ENCODE measurements at regions of chr14 and their contacts with region 1.

Region 1: GRCh38 chr14:99982537-99983250 is 82.5 kb upstream of the EVL start:
- DNase-seq: peak; percentile 77
- ATAC-seq: peak; percentile 94
- H3K4me3 Mint-ChIP-seq: no peak overlapping the region
- H3K27ac Mint-ChIP-seq: peak overlapping the region; percentile 9
- H3K4me1 Mint-ChIP-seq: peaks cover 14% of the 10 kb centered on the region
- H3K27me3 Mint-ChIP-seq: no peaks in the 10 kb centered on the region

Region 2: DNA sequence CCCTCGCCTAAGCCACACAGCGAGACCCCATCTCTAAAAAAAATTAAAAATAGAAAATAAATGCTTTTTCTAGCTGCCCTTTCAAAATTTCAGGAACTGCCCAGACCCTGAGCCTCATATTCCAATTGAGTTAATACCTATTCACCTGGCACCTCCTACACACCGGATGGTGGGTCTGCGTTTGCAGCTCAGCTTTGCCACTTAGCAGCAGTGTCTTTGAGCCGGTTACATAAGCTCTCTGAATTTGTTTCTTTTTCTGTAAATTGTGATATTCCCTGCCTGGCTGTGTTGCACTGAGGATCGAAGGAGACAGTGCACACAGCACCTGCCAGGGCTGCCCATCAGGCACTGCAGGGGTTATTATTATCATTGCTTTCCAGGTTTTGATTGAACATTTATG is 63.9 kb before region 1 on chr14:
- CTCF ChIA-PET with region 1: no interaction called
- POLR2A ChIA-PET with region 1: no interaction called
- intact Hi-C with region 1: no loop called
- DNase-seq: no peak
- ATAC-seq: no peak
- H3K4me3 Mint-ChIP-seq: no peak overlapping the region
- H3K27ac Mint-ChIP-seq: no peak overlapping the region
- H3K4me1 Mint-ChIP-seq: no peaks in the 10 kb centered on the region
- H3K27me3 Mint-ChIP-seq: peaks cover 6% of the 10 kb centered on the region

Region 3: DNA sequence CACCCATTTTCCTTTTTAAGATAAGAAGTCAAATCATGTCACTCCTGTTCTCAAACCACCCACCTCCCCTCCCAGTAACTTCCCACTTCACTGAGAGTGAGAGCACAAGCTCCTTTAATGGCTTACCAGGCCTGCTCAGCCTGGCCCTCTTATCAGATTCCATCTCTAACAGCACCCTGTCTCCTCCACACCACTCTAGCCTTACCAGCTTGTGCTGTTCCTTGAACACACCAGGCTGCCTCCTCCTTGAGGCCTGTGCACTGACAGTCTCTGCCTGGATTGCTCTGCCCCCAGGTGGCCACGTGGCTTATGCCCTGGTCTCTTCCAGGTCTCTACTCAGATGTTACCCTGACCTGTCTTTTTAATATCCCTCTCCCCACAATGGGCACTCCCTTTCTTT is 42.4 kb after region 1 on chr14:
- CTCF ChIA-PET with region 1: interaction called, 14 read pairs
- POLR2A ChIA-PET with region 1: no interaction called
- intact Hi-C with region 1: loop called in 1 of 2 experiments (anchors 1 kb)
- DNase-seq: peak; percentile 63
- ATAC-seq: peak; percentile 95
- H3K4me3 Mint-ChIP-seq: no peak overlapping the region
- H3K27ac Mint-ChIP-seq: no peak overlapping the region
- H3K4me1 Mint-ChIP-seq: peaks cover 12% of the 10 kb centered on the region
- H3K27me3 Mint-ChIP-seq: no peaks in the 10 kb centered on the region

Region 4: GRCh38 chr14:100049220-100049619 is 66.5 kb after region 1 on chr14:
- CTCF ChIA-PET with region 1: interaction called, 12 read pairs
- POLR2A ChIA-PET with region 1: no interaction called
- intact Hi-C with region 1: no loop called
- DNase-seq: no peak
- ATAC-seq: peak; percentile 47
- H3K4me3 Mint-ChIP-seq: no peak overlapping the region
- H3K27ac Mint-ChIP-seq: no peak overlapping the region
- H3K4me1 Mint-ChIP-seq: peaks cover 24% of the 10 kb centered on the region
- H3K27me3 Mint-ChIP-seq: no peaks in the 10 kb centered on the region

Region 5: DNA sequence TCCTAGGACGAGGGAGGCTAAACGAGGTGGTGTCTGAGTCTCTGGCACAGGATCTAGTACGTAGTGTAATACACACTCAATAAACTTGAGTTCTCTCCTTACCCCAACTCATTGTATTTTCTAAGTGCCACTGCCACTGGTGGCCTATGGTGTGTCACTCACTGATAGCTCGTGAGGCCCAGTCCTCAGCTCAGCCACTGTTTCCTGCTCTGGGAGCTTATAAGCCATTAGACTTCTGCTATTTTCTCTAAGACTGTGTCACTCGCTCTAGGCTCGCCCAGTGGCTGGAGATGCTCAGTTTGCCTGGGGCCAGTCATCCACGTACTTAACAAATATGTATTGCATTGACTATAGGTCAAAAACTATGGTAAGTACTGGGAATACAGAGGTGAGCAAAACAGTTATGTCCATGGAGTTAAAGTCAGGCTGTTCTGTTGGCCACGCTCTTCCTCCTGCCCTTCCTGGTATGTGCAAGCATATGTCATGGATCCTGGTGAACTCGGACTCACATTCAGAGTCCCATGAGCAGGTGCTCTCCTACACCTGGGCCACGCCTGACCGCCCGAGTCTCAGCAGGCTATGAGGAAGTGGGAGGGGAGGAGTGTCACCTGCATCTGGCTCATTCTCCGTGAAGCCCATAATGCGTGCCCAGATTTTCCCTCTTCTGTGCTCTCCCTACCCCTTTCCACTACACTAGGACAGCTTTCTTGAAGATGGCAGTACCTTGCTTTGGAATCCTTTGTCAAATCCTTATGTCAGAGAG is 135.1 kb after region 1 on chr14:
- CTCF ChIA-PET with region 1: interaction called, 13 read pairs
- POLR2A ChIA-PET with region 1: no interaction called
- intact Hi-C with region 1: no loop called
- DNase-seq: no peak
- ATAC-seq: peak; percentile 27
- H3K4me3 Mint-ChIP-seq: no peak overlapping the region
- H3K27ac Mint-ChIP-seq: peak overlapping the region; percentile 83
- H3K4me1 Mint-ChIP-seq: peaks cover 34% of the 10 kb centered on the region
- H3K27me3 Mint-ChIP-seq: no peaks in the 10 kb centered on the region

Region 6: DNA sequence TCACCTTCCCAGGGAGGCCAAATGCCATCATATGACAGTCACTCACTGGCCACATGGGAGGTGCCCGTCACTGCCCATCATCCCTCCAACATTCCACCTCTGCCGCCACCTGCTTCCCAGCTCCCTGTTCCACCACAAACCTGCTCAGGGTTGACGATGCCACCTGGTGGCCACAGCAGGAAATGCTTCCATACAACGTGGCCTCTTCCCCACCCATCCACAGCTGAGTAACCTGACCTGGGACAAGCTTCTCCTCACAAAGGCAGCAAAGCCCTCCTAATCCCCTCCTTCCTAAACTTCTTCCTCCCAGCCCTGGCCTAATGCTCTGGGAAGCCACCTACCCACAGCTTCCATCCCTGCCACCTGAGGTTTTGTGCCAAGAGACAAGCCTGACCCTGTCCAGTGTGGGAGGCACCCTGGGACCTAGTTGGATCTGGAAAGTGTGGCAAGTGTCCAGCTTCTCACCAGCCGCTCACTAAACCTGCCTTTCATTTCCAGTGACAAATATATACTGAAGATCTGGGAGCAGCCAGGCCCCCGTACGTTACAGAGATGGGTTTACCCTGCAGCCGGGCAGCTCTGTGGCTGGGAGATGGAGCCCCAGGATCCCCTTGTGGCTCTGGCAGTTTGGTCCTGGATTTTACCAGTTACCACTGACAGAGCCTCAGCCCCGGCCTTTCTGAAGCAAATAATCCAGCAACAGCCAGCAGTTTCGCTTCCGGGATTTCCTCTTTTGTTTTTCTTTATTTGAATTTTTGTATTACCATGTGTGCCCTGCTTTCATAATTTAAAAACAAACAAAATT is 172.6 kb after region 1 on chr14:
- CTCF ChIA-PET with region 1: interaction called, 9 read pairs
- POLR2A ChIA-PET with region 1: no interaction called
- intact Hi-C with region 1: loop called in 1 of 2 experiments (anchors 1 kb)
- DNase-seq: peak; percentile 75
- ATAC-seq: no peak
- H3K4me3 Mint-ChIP-seq: no peak overlapping the region
- H3K27ac Mint-ChIP-seq: no peak overlapping the region
- H3K4me1 Mint-ChIP-seq: peaks cover 6% of the 10 kb centered on the region
- H3K27me3 Mint-ChIP-seq: peaks cover 15% of the 10 kb centered on the region

Region 7: GRCh38 chr14:100221533-100222223 is 239.0 kb after region 1 on chr14:
- CTCF ChIA-PET with region 1: no interaction called
- POLR2A ChIA-PET with region 1: no interaction called
- intact Hi-C with region 1: no loop called
- DNase-seq: peak; percentile 84
- ATAC-seq: peak; percentile 93
- H3K4me3 Mint-ChIP-seq: no peak overlapping the region
- H3K27ac Mint-ChIP-seq: no peak overlapping the region
- H3K4me1 Mint-ChIP-seq: peaks cover 7% of the 10 kb centered on the region
- H3K27me3 Mint-ChIP-seq: no peaks in the 10 kb centered on the region